ENCODE measurements at regions of chr19 and their contacts with region 1.

Region 1: DNA sequence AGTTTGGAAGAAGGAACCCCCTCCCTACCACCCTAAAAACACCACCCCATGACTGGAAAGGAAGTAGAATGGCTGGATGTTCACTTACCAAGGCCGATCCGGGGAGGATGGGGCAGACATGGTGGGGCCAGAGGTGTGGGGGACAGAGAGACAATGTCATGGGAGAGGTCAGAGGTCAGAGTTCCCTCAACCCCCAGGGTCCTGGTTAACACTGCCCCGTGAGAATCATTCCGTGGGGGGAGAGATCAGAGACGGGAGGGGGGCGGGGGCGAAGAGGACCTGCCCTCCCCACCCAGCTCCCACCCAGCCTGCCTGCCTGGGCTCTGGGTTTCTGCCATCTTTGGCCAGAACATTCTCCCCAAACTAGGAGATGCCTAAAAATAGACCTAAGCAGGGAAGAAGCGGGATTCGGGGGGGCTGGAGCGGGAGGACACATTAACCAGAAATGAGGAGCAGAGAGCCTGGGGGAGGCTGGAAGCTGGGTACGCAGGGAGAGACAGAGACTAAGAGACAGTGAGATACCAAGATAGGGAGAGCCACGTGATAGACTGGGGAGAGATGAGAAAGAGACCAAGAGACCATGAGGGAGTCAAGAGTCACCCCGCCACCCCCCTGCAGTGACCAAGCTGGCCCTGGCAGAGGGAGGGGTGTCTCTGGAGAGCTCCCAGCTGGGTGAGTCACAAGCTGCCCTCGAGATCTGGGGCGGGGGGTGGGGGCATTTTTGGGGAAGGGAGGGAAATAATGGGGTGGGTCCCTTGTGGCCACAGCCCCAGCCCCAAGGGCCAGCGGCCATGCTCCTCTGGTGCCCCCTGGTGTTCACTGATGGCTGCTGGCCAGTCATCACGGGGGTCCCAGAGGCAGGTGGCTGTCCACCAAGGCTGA is 6.1 kb upstream of the KANK2 start:
- DNase-seq: peak; percentile 85
- ATAC-seq: peak; percentile 74

Region 2: DNA sequence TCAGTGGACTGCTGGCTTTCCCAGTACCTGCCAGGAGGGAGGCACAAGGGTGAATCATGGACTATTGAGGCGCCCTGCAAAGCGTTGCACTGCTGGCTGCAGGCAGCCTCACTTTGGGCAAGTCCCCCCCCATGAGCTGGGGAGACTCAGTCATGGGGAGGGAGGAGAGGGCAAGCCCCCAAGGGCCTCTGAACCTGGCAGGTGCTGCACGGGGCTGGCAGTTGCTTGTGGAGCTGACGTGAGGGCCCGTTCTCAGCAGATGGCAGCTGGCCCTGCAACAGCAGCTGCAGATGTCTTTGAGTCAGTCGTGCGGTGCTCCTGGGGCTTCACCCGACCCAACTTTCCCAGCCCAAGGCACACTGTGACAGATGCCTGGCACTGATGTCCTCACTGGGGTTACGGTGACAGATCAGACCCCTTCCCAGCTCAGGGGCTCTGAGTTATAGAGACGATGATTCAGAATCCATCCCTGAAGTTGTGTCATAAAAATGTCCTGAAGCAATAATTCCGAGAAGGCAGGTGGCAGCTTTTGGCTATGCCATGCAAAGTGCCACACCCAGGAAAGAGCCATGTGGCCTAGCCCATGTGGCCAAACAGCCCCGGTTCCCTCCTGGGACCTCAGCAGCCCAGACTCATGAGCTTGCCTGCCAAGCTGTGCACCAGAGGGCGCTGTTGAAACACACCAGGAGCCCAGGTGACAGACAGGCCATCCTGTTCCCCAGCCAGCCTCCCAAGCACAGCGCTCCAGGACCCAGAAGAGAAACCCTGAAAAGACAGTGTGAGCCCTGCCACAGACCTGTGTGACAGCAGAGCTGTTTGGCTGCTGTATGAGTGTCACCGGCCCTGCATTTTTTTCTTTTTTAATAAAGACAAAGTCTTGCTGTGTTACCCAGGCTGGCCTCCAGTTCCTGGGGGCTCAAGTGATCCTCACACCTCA is 167.7 kb before region 1 on chr19:
- intact Hi-C with region 1: loop called (anchors 5 kb)
- DNase-seq: peak; percentile 95
- ATAC-seq: peak; percentile 96

Region 3: GRCh38 chr19:11137542-11138384 is 65.7 kb before region 1 on chr19:
- intact Hi-C with region 1: loop called (anchors 1 kb)
- DNase-seq: peak; percentile 86
- ATAC-seq: peak; percentile 64

Measured in Right ventricle myocardium superior (tissue), 1 donor.